ENCODE measurements at regions of chr7 and their contacts with region 1.

Region 1: DNA sequence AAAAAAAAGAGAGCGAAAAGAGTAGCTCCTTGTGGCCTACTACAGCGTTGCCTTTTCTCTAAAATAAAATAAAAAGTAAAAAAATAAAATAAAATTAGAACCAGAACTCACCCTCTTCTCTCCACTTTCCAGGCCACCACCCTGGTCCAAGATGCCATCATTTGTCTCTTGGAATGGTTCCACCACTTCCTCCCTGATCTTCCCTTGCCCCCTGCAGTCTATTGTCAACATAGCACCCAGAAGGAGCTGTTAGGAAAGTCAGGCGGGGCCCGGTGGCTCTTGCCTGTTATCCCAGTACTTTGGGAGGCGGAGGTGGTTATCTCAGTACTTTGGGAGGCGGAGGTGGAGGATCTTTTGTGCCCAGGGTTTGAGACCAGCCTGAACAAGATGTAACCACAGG is 7.6 kb upstream of the GRID2IP start:
- DNase-seq: no peak
- ATAC-seq: peak; percentile 60; the same call in 2 of the 3 replicates
- H3K4me3 ChIP-seq: no peak overlapping the region
- H3K27ac ChIP-seq: no peak overlapping the region
- H3K4me1 ChIP-seq: no peaks in the 10 kb centered on the region
- H3K27me3 ChIP-seq: no peaks in the 10 kb centered on the region
- CTCF ChIP-seq: peak; percentile 43 to 62 (median 49)
- EP300 ChIP-seq: no peak
- POLR2A ChIP-seq: no peak
- RAD21 ChIP-seq: peak; percentile 67

Region 2: DNA sequence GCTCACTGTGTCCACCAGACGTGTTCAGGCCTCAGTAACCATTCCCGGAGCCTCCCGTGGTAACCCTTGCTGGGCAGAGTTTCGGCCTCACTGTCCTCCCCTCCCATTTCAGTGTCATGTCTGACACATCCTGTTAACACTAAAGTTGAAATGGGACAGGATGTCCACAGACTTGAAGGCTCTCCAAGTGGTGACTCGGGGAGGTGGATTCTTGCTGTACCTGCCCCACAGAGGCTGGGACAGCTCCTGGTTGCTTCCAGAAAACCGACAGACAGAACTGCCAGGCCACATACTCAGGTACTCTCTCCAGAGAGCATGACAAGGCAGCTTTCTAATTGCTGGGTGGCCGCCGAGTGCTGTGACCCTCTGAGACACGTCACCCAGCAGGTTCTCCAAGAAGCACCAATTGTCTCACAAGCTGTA is 268.5 kb before region 1 on chr7:
- CTCF ChIA-PET with region 1: no interaction called
- POLR2A ChIA-PET with region 1: interaction called, 11 read pairs
- RAD21 ChIA-PET with region 1: no interaction called
- SMC1A ChIA-PET with region 1: no interaction called
- in situ Hi-C with region 1: no loop called
- intact Hi-C with region 1: no loop called
- DNase-seq: no peak
- ATAC-seq: no peak
- H3K4me3 ChIP-seq: no peak overlapping the region
- H3K27ac ChIP-seq: no peak overlapping the region
- H3K4me1 ChIP-seq: no peaks in the 10 kb centered on the region
- H3K27me3 ChIP-seq: no peaks in the 10 kb centered on the region
- CTCF ChIP-seq: no peak
- EP300 ChIP-seq: no peak
- POLR2A ChIP-seq: no peak
- RAD21 ChIP-seq: no peak

Region 3: DNA sequence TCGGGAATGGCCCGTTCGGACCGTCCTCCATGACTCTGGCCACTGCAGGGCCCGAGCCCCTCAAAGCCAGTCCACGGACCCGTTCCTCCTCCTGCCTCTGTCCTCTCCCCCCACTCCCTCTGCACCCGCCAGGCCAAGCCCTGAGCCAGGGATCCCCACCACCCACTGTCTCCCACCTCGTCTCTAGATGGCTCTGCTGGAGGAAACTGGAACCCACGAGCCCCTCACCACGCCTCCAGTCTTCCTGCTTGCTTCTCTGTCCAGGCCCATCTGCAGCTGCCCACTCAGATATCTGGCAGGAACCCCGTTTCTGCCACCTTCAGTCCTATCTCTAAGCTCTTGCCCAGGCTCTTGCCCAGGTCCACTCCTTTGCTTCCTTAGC is 31.8 kb before region 1 on chr7:
- CTCF ChIA-PET with region 1: interaction called, 12 read pairs
- POLR2A ChIA-PET with region 1: no interaction called
- RAD21 ChIA-PET with region 1: no interaction called
- SMC1A ChIA-PET with region 1: no interaction called
- in situ Hi-C with region 1: no loop called
- intact Hi-C with region 1: no loop called
- DNase-seq: no peak
- ATAC-seq: no peak
- H3K4me3 ChIP-seq: no peak overlapping the region
- H3K27ac ChIP-seq: no peak overlapping the region
- H3K4me1 ChIP-seq: no peaks in the 10 kb centered on the region
- H3K27me3 ChIP-seq: peaks cover 0 to 3% of the 10 kb centered on the region in 2 experiments; a peak in 3 of 4 replicates
- CTCF ChIP-seq: no peak
- EP300 ChIP-seq: no peak
- POLR2A ChIP-seq: no peak
- RAD21 ChIP-seq: no peak

Measured in GM12878 (cell line).